Activated CD8-positive, alpha-beta memory T cell treated with anti-CD3 and anti-CD28 coated beads, Interleukin-2, amount 10 ng/mL, durations not matched to agents 7 days and 5 days (primary cell): ENCODE measurements at regions of chr12 and their contacts with region 1.

Region 1: GRCh38 chr12:57063991-57064685 is 14.2 kb upstream of the MYO1A start:
- DNase-seq: peak; percentile 70
- ATAC-seq: peak; percentile 91
- H3K4me3 Mint-ChIP-seq: peak overlapping the region; percentile 71
- H3K27ac Mint-ChIP-seq: peak overlapping the region; percentile 95
- H3K4me1 Mint-ChIP-seq: peaks cover 34% of the 10 kb centered on the region
- H3K27me3 Mint-ChIP-seq: no peaks in the 10 kb centered on the region

Region 2: DNA sequence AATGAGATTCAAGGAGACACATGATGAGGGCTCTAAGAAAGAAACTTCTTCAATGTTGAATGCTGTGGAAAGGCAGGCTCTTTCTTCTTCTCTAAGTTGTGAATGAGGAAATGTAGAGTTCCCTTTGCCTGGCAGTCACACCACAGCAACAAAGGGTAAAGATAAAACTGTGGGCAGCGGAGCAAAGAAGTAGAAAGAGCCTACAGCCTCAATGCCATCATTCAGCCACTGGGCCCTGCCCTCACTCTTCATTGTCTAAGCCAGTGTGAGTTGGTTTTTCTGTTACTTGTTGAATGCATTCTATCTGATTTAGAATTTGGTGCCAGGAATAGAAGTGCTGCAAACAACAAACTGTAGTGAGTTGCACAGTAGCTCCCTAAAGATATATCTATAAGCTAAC is 142.1 kb before region 1 on chr12:
- CTCF ChIA-PET with region 1: no interaction called
- DNase-seq: no peak
- ATAC-seq: no peak
- H3K4me3 Mint-ChIP-seq: no peak overlapping the region
- H3K27ac Mint-ChIP-seq: no peak overlapping the region
- H3K4me1 Mint-ChIP-seq: no peaks in the 10 kb centered on the region
- H3K27me3 Mint-ChIP-seq: peaks cover 19% of the 10 kb centered on the region

Region 3: GRCh38 chr12:57031138-57031725 is 32.9 kb before region 1 on chr12:
- CTCF ChIA-PET with region 1: interaction called, 25 read pairs
- DNase-seq: no peak
- ATAC-seq: peak; percentile 53
- H3K4me3 Mint-ChIP-seq: no peak overlapping the region
- H3K27ac Mint-ChIP-seq: peak overlapping the region; percentile 51
- H3K4me1 Mint-ChIP-seq: peaks cover 25% of the 10 kb centered on the region
- H3K27me3 Mint-ChIP-seq: no peaks in the 10 kb centered on the region

Region 4: DNA sequence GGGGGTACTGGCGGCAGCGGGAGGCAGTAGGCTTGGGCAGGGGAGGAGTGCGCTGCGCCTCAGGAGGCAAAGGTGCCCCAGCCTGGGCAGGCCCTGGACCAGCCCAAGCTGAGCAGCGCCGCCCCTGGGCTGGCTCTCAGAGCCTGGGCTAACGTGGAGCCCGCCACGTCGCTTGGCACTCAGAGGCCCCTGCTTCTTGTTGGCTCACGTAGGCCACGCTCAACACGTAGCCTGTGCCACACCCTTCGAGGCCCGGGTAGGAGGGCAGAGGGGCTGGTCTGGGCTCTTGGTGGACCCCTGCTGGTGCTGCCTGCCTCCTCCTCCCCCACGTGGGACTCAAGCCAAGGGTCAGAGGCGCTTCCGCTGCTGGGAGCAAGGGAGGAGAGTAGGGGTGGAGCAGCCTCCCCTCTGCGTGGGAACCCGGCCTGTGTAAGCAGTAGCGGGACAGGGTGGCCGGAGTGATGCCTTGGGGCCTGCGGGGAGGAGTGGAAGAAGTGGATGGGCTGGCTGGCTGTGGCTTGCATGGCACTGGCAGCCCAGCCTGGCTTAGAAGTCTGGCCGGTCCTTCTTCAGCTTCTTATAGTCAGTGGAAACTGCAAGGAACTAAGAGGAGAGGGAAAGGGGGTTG is 171.0 kb after region 1 on chr12:
- CTCF ChIA-PET with region 1: no interaction called
- DNase-seq: no peak
- ATAC-seq: no peak
- H3K4me3 Mint-ChIP-seq: no peak overlapping the region
- H3K27ac Mint-ChIP-seq: no peak overlapping the region
- H3K4me1 Mint-ChIP-seq: peaks cover 45% of the 10 kb centered on the region
- H3K27me3 Mint-ChIP-seq: peaks cover 29% of the 10 kb centered on the region